Activated naive CD4-positive, alpha-beta T cell treated with anti-CD3 and anti-CD28 coated beads for 36 hours (primary cell): ENCODE measurements at regions of chr2 and their contacts with region 1.

Region 1: DNA sequence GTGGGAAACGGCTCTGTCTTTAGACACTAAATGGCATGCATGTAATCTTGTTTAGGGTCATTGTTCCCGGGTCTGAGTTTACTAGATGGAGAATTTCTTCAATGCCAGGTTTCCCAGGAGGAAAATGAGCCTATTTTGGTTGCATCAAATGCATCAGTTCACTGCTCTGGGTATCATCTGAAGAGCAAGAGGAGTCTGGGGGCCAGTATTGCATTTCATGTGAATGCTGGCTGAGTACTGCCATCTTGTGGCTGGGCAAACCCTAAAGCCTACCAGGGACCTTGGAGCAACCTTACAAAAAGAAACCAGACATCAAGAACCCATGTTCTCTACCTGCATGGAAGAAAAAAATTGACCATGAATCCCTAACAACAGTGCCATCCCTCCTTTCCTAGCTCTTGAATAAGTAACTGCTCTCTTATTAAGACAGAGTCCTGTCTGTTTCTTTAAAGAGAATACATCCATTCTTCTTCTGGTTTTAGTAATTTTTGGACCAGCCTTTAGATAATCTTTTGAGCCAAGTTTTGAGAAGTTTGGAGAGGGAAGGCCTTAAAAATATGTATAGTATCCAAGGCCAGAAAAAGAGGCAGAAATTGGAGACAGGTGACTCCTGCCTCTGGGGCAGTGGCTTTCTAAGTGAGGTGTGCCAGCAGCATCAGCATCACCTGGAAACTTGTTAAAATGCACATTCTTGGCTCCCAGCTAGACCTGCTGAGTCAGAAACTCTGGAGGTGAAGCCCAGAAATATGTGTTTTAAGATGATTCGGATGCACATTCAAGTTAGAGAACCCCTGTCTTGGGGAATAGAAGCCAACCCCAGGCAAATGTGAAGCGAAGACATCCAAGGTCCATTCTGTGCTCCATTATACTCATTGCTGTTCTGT is 261.0 kb upstream of the CXCR4 start:
- DNase-seq: peak; percentile 90
- H3K4me3 Mint-ChIP-seq: no peak overlapping the region
- H3K27ac Mint-ChIP-seq: no peak overlapping the region
- H3K4me1 Mint-ChIP-seq: peaks cover 79% of the 10 kb centered on the region
- H3K27me3 Mint-ChIP-seq: no peaks in the 10 kb centered on the region

Region 2: DNA sequence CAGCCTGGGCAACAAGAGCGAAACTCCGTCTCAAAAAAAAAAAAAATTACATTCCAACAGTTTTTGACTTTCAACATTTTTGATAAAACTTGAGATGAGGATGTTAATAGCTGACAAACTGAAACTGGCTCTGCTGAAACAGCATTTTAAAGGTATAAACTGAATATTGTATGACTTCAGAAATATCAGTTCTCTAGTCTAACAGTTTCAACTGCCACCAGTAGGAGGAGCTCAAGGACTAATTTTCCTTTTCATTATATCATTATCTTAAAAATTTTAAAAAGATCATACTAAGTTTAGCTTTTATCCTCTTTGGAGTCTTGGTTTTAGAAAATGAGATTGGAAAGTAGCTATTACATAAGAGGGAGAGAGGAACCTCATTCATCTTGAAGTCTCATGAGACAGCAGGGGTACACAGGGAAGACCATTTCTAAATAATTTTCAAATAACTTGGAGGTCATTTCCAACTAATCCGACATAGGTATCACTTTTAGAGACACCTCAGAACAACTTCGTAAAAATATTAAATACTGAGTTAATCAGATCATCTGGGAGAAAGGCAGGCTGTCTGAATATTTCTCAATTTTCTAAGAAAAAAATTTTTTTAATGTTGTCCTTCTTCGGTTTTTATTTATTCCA is 465.1 kb before region 1 on chr2:
- CTCF ChIA-PET with region 1: interaction called, 71 read pairs
- intact Hi-C with region 1: loop called (anchors 1 kb)
- DNase-seq: peak; percentile 65
- H3K4me3 Mint-ChIP-seq: no peak overlapping the region
- H3K27ac Mint-ChIP-seq: no peak overlapping the region
- H3K4me1 Mint-ChIP-seq: peaks cover 10% of the 10 kb centered on the region
- H3K27me3 Mint-ChIP-seq: no peaks in the 10 kb centered on the region

Region 3: DNA sequence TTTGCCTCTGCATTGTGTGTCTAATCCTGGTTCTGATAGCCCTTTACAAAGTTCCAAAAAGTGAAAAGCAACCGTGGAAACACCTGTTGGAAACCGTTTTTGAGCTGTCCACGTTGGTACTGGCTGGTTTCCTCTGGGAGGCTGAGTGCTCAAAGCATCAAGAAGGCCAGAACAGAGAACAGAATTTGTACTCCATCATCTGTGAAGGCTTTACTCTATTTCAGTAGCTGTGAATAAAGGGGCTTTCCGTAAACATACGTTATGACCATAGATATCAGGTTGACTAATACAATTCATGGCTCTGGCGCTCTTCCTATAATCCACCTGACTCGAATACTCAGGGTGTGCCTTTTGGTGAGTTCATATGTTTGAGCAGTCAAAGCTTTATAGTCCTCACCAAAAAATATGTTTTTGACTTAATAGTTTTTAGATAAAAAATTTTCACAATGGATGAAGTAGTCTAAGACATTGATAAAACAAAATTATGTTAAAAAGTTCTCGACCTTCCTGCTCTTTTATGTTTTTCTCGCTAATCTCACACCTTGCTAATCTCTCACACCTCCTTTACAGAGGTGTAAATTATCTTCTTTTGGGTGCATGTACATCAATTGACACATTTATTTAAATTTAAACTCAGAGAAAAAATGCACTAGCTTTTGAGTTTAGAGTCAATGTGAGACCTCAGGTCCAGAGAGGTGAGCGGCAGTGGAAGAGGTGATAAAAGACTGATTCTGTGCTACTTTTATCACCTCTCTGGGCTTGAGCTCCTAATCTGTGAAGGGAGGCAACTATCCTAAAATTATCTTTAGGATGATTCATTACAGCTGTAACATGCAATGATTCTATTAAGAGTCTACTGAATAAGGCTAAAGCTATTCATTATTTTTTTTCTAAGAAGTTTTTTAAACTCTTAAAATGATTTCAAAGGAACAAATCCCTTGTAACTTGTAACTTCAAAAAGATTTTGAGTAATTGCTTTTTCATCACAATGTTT is 326.3 kb before region 1 on chr2:
- CTCF ChIA-PET with region 1: interaction called, 5 read pairs
- intact Hi-C with region 1: loop called (anchors 1 kb)
- DNase-seq: peak; percentile 53
- H3K4me3 Mint-ChIP-seq: peak overlapping the region; percentile 53
- H3K27ac Mint-ChIP-seq: peak overlapping the region; percentile 96
- H3K4me1 Mint-ChIP-seq: peaks cover 88% of the 10 kb centered on the region
- H3K27me3 Mint-ChIP-seq: no peaks in the 10 kb centered on the region

Region 4: GRCh38 chr2:136255648-136256463 is 123.1 kb before region 1 on chr2:
- CTCF ChIA-PET with region 1: interaction called, 4 read pairs
- intact Hi-C with region 1: loop called (anchors 1 kb)
- DNase-seq: peak; percentile 66
- H3K4me3 Mint-ChIP-seq: no peak overlapping the region
- H3K27ac Mint-ChIP-seq: no peak overlapping the region
- H3K4me1 Mint-ChIP-seq: peaks cover 30% of the 10 kb centered on the region
- H3K27me3 Mint-ChIP-seq: peaks cover 2% of the 10 kb centered on the region

Region 5: GRCh38 chr2:136305517-136306192 is 73.3 kb before region 1 on chr2:
- CTCF ChIA-PET with region 1: interaction called, 6 read pairs
- intact Hi-C with region 1: loop called (anchors 1 kb)
- DNase-seq: peak; percentile 85
- H3K4me3 Mint-ChIP-seq: no peak overlapping the region
- H3K27ac Mint-ChIP-seq: peak overlapping the region; percentile 81
- H3K4me1 Mint-ChIP-seq: peaks cover 21% of the 10 kb centered on the region
- H3K27me3 Mint-ChIP-seq: no peaks in the 10 kb centered on the region

Region 6: DNA sequence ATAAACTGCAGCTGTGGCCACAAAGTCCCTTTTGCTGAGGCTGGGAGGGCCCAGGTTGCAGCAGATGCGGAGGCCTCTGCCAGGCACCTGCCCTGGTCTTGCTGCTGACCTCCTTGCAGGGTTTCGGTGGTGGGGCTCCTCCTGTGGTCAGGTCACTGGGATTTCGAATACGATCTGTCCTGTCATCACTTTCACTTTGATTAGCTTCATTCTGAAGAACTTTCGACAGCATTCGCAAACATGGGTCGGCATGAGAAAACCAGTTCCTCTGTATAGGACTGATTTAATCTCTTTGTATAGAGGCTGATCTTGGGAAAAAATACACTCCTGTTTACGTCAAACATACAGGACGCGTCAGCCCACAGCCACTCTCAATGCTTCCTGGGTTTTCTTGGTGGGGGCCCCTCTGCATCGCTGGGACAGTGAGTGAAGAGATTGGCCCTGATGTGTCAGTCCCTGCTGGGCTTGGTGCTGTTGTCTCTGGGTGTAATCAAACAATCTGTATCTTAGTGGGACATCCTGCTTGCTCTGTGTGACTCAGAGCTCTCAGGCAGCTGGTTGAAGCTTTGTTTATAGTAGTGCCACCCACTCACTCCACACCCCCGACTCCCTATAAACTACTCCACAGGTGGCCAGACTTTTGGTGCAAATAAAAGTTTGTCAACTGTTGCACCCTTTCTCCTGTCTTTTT is 51.6 kb before region 1 on chr2:
- CTCF ChIA-PET with region 1: interaction called, 8 read pairs
- intact Hi-C with region 1: loop called (anchors 1 kb)
- DNase-seq: peak; percentile 89
- H3K4me3 Mint-ChIP-seq: peak overlapping the region; percentile 52
- H3K27ac Mint-ChIP-seq: peak overlapping the region; percentile 82
- H3K4me1 Mint-ChIP-seq: peaks cover 62% of the 10 kb centered on the region
- H3K27me3 Mint-ChIP-seq: no peaks in the 10 kb centered on the region